ENCODE measurements at regions of chr10 and their contacts with region 1.

Region 1: GRCh38 chr10:127715782-127716378 is 21.1 kb upstream of the FOXI2 start:
- DNase-seq: peak in 1 of 2 donors; percentile 51
- H3K4me3 ChIP-seq: no peak overlapping the region
- H3K27ac ChIP-seq: no peak overlapping the region
- H3K4me1 ChIP-seq: no peaks in the 10 kb centered on the region
- H3K27me3 ChIP-seq: peaks cover 0 to 3% (median 0%) of the 10 kb centered on the region in 3 donors
- CTCF ChIP-seq: peak in 1 of 7 experiments; percentile 16
- EP300 ChIP-seq: no peak
- POLR2A ChIP-seq: no peak

Region 2: DNA sequence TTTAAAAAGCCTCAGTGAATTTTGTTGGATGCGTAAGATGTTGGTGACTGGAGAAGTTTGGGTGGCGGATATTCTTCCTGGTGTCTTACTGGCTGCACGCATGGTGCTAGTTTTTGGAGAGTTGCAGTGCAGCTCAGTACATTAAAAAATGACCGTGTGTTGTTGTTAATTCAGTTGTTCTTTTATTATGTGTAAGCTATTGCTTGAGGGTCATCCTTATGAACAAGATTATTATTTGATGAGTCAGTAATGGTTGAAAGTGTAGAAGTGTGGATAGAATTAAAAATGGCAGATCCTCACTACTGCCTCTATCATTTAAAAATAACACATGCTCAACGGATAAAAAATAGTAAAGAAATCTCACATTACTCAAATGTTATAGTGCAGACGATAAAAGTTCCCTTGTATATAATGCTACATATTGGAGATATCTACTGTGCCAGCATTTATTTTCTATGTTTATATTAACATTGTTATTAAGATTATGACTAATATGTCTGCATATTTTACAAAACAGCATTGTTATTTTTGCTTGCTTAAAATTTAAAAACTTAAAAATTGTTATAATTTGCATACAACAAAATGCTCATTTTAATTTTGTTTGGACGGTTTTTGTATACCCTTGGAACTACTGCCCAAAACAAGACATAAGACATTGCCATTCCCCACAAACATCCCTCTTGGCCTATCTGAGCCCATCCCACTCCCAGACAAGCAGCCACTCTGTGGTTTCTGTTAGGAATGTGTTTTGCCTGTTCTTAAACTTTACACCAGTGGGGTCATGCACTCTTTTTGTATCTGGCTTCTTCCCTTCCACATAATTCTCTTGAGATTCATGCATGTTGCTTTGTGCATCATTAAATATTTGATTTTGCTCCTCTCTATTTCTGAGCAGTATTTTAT is 668.7 kb before region 1 on chr10:
- intact Hi-C with region 1: no loop called
- DNase-seq: no peak
- H3K4me3 ChIP-seq: no peak overlapping the region
- H3K27ac ChIP-seq: no peak overlapping the region
- H3K4me1 ChIP-seq: peaks cover 3 to 10% (median 6%) of the 10 kb centered on the region in 4 donors
- H3K27me3 ChIP-seq: no peaks in the 10 kb centered on the region
- CTCF ChIP-seq: no peak
- EP300 ChIP-seq: no peak
- POLR2A ChIP-seq: no peak

Region 3: DNA sequence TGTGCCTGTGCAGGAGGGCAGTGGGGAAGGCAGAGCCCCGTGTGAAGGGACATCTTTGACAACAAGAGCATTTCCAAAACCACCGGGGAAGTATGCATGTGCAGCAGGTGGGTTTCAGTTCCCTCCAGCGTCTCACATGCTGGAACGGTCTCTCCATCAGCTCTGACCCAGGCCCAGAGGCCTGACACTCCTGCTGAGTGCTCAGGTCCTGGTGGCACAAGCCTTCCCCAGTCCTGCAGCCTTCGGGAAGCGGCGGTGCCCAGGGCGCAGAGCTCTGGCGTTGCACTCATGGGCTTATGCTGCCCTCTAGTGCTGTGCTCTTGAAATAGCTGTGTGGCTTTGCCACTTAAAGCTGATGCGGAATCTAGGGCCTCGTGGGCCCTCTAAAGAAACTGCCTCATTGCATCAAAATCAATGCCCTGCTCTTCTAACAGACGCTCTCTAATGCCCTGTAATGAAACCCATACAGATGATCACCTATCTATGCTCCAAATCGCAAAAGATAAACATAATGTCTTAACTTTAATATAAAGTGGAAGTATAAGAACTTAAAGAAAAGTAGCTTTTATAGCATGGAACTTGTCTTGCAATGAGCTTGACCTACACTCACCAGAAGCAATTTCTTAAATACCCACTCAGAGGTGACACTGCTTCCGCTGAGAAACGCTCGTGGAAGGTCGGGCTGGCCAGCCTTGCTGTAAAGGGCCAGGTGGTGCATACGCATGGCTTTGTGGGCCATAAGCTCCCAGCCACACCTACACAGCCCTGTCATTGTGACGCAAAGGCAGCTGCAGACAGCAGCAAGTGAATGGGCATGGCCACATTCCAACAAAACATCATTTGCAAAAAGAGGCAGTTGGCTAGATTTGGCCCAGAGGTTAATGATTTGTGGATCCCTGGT is 138.2 kb after region 1 on chr10:
- intact Hi-C with region 1: loop called (anchors 10 kb)
- DNase-seq: peak; percentile 63 to 80
- H3K4me3 ChIP-seq: no peak overlapping the region
- H3K27ac ChIP-seq: no peak overlapping the region
- H3K4me1 ChIP-seq: peaks cover 0 to 8% (median 2%) of the 10 kb centered on the region in 4 donors
- H3K27me3 ChIP-seq: peaks cover 0 to 12% (median 4%) of the 10 kb centered on the region in 3 donors
- CTCF ChIP-seq: peak in 5 of 7 experiments; percentile 58 to 86 (median 74)
- EP300 ChIP-seq: no peak
- POLR2A ChIP-seq: no peak